OCI-LY7 (cell line): ENCODE measurements at regions of chr3 and their contacts with region 1.

Region 1: DNA sequence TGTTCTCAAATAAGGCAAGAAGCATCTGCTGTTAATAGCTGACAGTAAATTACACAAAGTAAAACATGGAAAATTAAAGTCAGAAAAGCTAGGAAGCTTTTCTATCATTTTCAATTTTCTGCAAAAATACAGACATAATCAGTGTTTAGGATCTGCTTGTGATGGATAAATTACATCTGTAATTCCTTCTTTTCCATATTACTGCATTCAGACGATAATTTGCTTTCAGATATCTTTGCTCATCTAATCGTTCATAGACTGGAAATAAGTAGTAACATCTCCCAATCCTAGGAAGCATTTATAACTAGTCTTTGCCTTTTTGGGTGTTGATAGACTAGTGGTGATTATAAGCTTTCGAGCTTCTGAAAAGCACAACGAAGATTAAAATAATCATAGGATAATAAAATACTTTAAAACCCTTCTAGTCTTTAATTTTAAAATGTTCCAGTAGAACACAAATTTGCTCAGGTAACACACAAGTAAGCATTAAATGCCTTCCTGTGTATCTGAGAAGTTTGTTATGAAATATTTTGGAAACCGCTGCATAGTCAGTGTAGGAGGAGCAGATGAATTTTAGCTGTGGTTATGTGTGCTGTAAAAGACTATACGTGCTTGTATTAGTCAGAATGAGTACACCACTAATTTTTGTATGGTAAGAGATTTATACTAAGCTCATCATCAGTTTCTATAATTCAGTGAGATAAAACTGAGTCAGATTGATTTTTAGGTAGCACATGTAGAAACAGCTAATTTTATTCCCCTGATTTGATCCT is 41.0 kb downstream of the MBNL1 start:
- DNase-seq: no peak
- H3K4me3 ChIP-seq: no peak overlapping the region
- H3K27ac ChIP-seq: no peak overlapping the region
- H3K4me1 ChIP-seq: no peaks in the 10 kb centered on the region
- CTCF ChIP-seq: no peak

Region 2: DNA sequence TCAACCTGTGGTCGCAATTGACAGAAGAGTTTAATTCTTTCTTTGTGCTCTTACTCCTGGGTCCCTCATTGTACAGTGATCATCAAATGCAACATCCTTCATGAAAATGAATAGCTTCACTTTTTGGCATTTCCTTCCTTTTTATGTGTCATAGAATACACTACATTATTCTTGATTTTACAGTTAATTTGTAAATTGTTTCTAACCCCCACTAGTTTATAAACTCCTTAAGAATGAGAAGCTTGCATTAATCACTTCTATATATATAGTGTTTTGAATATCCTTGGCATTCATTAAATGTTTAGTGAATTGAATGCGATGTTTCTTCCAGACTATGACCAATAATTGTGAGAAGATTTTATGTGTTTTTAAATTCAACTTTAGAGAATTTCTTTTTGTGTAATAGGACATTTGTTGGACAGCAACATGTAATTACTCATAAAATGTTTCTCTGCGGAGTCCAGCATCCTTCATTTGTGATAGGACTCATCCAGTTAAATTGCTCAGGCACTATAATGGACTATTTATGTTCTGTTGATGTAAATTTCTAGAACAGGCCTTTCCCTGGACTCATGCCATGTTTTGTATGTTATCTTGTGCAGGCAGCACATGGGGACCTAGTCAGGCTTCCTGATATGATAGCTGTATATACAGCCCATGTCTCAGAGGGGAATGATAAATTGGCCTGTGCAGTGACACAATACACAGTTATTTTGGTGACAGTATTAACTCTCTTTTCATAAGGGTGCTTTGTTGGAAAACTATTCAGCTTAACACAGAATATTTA is 10.3 kb after region 1 on chr3:
- CTCF ChIA-PET with region 1: no interaction called
- POLR2A ChIA-PET with region 1: interaction called, 35 read pairs
- intact Hi-C with region 1: no loop called
- DNase-seq: no peak
- H3K4me3 ChIP-seq: no peak overlapping the region
- H3K27ac ChIP-seq: no peak overlapping the region
- H3K4me1 ChIP-seq: peaks cover 16% of the 10 kb centered on the region
- CTCF ChIP-seq: no peak

Region 3: GRCh38 chr3:152331018-152331541 is 21.4 kb after region 1 on chr3:
- CTCF ChIA-PET with region 1: no interaction called
- POLR2A ChIA-PET with region 1: interaction called, 17 read pairs
- intact Hi-C with region 1: no loop called
- DNase-seq: no peak
- H3K4me3 ChIP-seq: no peak overlapping the region
- H3K27ac ChIP-seq: no peak overlapping the region
- H3K4me1 ChIP-seq: peaks cover 8% of the 10 kb centered on the region
- CTCF ChIP-seq: no peak